ENCODE measurements at regions of chr4 and their contacts with region 1.

Region 1: GRCh38 chr4:77862478-77863216 is at the start of gene MRPL1:
- DNase-seq: peak; percentile 92
- ATAC-seq: peak; percentile 78
- H3K4me3 Mint-ChIP-seq: peak within 1 kb of the TSS; percentile 98
- H3K27ac Mint-ChIP-seq: peak within 1 kb of the TSS; percentile 100
- H3K4me1 Mint-ChIP-seq: peaks cover 61% of the 10 kb centered on the region
- H3K27me3 Mint-ChIP-seq: peaks cover 2% of the 10 kb centered on the region
- total RNA-seq, gene MRPL1: 61.1 to 70.6 TPM

Region 2: DNA sequence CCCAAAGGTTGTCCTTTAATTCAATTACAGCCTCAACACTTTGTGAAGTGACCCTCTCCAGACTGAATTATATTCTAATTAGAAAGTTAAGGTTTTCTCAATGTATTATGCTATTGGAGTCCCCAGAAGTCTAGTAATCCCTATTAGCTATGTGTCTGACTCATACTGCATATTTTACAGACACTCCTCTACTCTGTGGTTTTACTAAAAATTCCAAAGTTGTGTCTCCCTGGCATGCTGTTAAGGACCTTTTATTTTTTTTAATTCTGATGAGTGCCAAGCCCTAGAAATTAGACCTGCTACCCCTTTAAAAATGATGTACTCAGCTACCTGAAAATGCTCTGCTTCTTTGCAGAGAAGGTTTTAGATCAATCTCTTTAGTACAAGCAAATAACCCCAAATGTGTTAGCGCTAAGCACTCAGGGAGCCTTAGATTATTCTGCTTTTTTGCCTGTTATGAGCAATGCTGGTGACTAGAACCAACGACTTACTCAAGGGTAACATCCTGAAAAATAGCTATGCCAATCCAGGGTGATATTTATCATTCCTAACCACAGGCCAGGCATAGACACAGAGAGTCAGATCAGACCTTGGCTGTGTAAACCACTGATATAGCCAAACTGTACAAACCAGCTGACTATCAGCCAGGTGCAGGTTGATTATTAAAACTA is 283.1 kb before region 1 on chr4:
- CTCF ChIA-PET with region 1: no interaction called
- POLR2A ChIA-PET with region 1: no interaction called
- intact Hi-C with region 1: loop called in 1 of 2 experiments (anchors 1 kb)
- DNase-seq: no peak
- ATAC-seq: peak; percentile 63
- H3K4me3 Mint-ChIP-seq: no peak overlapping the region
- H3K27ac Mint-ChIP-seq: peak overlapping the region; percentile 70
- H3K4me1 Mint-ChIP-seq: peaks cover 39% of the 10 kb centered on the region
- H3K27me3 Mint-ChIP-seq: peaks cover 17% of the 10 kb centered on the region

Region 3: DNA sequence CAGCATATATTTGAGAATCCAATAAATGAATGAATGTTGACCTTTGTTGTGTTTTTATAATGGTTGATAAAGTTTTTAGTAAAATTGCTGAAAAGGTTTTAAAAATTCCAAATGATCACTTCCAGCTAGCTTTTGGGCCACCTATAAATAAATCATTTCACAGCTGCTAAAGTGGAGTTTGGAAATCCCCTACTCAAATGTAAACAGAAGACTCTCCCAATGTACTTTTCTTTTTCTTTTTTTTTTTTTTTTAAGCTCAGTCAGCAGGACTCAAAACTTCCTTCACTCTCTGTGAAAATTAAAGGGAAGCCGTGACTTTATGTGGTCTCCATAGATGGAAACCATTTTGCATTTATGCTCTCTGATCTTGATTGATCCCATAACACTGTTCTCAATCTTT is 211.9 kb before region 1 on chr4:
- CTCF ChIA-PET with region 1: no interaction called
- POLR2A ChIA-PET with region 1: no interaction called
- intact Hi-C with region 1: no loop called
- DNase-seq: no peak
- ATAC-seq: no peak
- H3K4me3 Mint-ChIP-seq: no peak overlapping the region
- H3K27ac Mint-ChIP-seq: no peak overlapping the region
- H3K4me1 Mint-ChIP-seq: no peaks in the 10 kb centered on the region
- H3K27me3 Mint-ChIP-seq: peaks cover 3% of the 10 kb centered on the region

Region 4: GRCh38 chr4:77734928-77735327 is 127.7 kb before region 1 on chr4:
- CTCF ChIA-PET with region 1: interaction called, 3 read pairs
- POLR2A ChIA-PET with region 1: interaction called, 5 read pairs
- intact Hi-C with region 1: loop called (anchors 2 to 5 kb)
- DNase-seq: peak; percentile 58
- ATAC-seq: peak; percentile 98
- H3K4me3 Mint-ChIP-seq: peak overlapping the region; percentile 70
- H3K27ac Mint-ChIP-seq: peak overlapping the region; percentile 89
- H3K4me1 Mint-ChIP-seq: peaks cover 55% of the 10 kb centered on the region
- H3K27me3 Mint-ChIP-seq: no peaks in the 10 kb centered on the region

Region 5: GRCh38 chr4:77827343-77827742 is 35.3 kb before region 1 on chr4:
- CTCF ChIA-PET with region 1: interaction called, 4 read pairs
- POLR2A ChIA-PET with region 1: interaction called, 13 read pairs
- intact Hi-C with region 1: no loop called
- DNase-seq: no peak
- ATAC-seq: peak; percentile 60
- H3K4me3 Mint-ChIP-seq: no peak overlapping the region
- H3K27ac Mint-ChIP-seq: peak overlapping the region; percentile 77
- H3K4me1 Mint-ChIP-seq: peaks cover 40% of the 10 kb centered on the region
- H3K27me3 Mint-ChIP-seq: no peaks in the 10 kb centered on the region

Region 6: GRCh38 chr4:77843628-77844027 is 19.0 kb before region 1 on chr4:
- CTCF ChIA-PET with region 1: interaction called, 5 read pairs
- POLR2A ChIA-PET with region 1: interaction called, 8 read pairs
- intact Hi-C with region 1: loop called (anchors 1 kb)
- DNase-seq: no peak
- ATAC-seq: peak; percentile 88
- H3K4me3 Mint-ChIP-seq: no peak overlapping the region
- H3K27ac Mint-ChIP-seq: peak overlapping the region; percentile 56
- H3K4me1 Mint-ChIP-seq: peaks cover 25% of the 10 kb centered on the region
- H3K27me3 Mint-ChIP-seq: no peaks in the 10 kb centered on the region

Region 7: GRCh38 chr4:78092850-78093249 is 230.2 kb after region 1 on chr4:
- CTCF ChIA-PET with region 1: no interaction called
- POLR2A ChIA-PET with region 1: no interaction called
- intact Hi-C with region 1: no loop called
- DNase-seq: no peak
- ATAC-seq: no peak
- H3K4me3 Mint-ChIP-seq: no peak overlapping the region
- H3K27ac Mint-ChIP-seq: no peak overlapping the region
- H3K4me1 Mint-ChIP-seq: no peaks in the 10 kb centered on the region
- H3K27me3 Mint-ChIP-seq: peaks cover 10% of the 10 kb centered on the region